Activated naive CD4-positive, alpha-beta T cell treated with anti-CD3 and anti-CD28 coated beads for 36 hours (primary cell): ENCODE measurements at regions of chr11 and their contacts with region 1.

Region 1: GRCh38 chr11:46845740-46846509 is at the start of gene CKAP5:
- DNase-seq: peak; percentile 91
- H3K4me3 Mint-ChIP-seq: peak within 1 kb of the TSS; percentile 95
- H3K27ac Mint-ChIP-seq: peak within 1 kb of the TSS; percentile 91
- H3K4me1 Mint-ChIP-seq: peaks cover 33% of the 10 kb centered on the region
- H3K27me3 Mint-ChIP-seq: no peaks in the 10 kb centered on the region
- total RNA-seq, gene CKAP5: 205 to 216 TPM

Region 2: DNA sequence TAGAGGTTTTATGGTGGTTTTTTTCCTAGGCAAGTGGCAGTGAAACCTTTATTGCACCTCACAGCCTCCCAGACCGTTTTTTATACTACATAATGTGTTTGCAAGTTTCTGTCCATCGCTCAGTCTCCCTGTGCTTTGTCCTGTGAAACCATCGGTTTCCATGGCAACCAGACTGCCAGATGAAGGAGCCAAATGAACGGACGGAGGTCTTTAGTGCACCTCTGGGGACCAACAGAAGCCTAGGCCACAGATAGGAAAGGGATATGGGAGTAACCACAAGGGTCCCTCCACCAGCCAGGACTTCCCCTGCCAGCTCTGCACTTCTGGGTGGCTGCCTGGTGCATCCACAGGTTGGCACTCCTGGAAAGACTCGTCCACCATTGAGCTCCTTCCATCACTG is 1345.5 kb before region 1 on chr11:
- CTCF ChIA-PET with region 1: no interaction called
- intact Hi-C with region 1: no loop called
- DNase-seq: no peak
- H3K4me3 Mint-ChIP-seq: no peak overlapping the region
- H3K27ac Mint-ChIP-seq: no peak overlapping the region
- H3K4me1 Mint-ChIP-seq: no peaks in the 10 kb centered on the region
- H3K27me3 Mint-ChIP-seq: peaks cover 19% of the 10 kb centered on the region

Region 3: DNA sequence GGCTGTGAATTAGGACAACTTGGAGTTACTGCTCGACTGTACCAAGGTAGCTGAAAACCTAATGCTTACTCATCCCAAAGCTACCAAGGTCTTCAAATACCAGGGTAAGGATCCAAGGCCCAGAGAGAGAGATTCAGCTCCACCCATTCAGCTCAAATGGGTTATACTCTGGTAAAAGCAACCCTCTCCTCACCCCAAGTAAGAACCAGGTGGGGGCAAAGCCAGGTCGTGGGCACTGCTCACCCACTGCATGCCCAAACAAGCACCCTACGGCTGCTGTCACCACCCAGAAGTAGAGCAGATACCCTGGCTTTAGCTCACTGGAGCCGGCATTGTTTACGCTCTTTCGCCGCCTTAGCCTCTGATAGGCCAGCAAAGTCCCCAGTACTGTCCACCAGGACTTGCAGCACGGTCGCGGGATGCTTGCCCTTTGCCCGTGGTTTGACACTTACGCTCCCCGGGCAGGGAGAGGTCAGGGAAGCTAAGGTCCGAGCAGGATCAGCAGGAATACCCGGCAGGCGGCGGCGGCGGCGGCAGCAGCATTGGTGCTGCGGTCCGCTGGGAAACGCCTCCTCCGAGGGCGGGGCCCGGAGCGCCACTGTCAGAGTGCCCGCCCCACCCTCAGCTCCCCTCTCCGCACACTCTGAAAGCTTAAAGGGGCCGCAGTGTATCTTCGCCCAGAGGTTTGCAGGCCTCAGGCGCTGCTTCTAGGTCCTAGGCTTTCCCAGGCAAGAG is 19.4 kb before region 1 on chr11:
- CTCF ChIA-PET with region 1: no interaction called
- intact Hi-C with region 1: loop called (anchors 2 kb)
- DNase-seq: peak; percentile 66
- H3K4me3 Mint-ChIP-seq: peak overlapping the region; percentile 60
- H3K27ac Mint-ChIP-seq: no peak overlapping the region
- H3K4me1 Mint-ChIP-seq: peaks cover 24% of the 10 kb centered on the region
- H3K27me3 Mint-ChIP-seq: no peaks in the 10 kb centered on the region

Region 4: DNA sequence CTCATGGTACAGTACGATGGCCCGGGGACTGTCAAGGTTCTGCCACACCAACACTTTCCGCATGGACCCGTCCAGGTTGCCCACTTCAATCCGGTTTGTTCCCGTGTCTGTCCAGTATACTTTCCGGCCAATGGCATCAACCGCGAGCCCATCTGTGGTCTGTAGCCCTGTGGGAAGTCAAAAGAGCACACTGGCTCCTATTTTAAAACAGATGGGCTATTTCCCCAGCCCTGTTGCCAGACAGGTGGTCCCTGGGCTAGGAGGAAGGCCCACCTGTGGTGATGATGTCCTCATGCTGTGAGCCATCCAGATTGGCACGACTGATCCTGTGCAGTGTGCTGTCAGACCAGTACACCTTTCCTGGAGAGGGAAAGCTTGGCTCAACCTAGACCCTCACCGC is 30.5 kb after region 1 on chr11:
- CTCF ChIA-PET with region 1: no interaction called
- intact Hi-C with region 1: no loop called
- DNase-seq: no peak
- H3K4me3 Mint-ChIP-seq: no peak overlapping the region
- H3K27ac Mint-ChIP-seq: no peak overlapping the region
- H3K4me1 Mint-ChIP-seq: no peaks in the 10 kb centered on the region
- H3K27me3 Mint-ChIP-seq: peaks cover 2% of the 10 kb centered on the region

Region 5: DNA sequence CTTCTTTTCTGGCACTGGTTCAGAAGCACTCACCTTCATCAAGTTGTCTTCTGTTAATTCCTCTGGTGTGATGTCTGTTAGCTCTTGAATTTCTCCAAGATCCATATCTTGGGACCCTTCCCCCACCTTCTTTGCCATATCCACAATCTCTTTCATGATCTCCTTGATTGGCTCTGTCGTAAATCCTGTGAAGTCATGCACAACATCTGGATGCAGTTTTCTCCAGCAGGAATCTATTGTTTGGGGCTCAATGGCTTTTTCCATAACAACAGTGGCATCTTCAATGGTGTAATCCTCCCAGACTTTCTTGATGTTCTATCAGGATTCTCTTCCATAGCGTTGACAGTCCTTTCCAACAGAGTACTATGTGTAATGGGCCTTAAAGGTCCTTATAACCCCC is 187.5 kb after region 1 on chr11:
- CTCF ChIA-PET with region 1: no interaction called
- intact Hi-C with region 1: no loop called
- DNase-seq: no peak
- H3K4me3 Mint-ChIP-seq: no peak overlapping the region
- H3K27ac Mint-ChIP-seq: no peak overlapping the region
- H3K4me1 Mint-ChIP-seq: no peaks in the 10 kb centered on the region
- H3K27me3 Mint-ChIP-seq: no peaks in the 10 kb centered on the region